Activated CD8-positive, alpha-beta T cell treated with anti-CD3 and anti-CD28 coated beads for 36 hours (primary cell): ENCODE measurements at regions of chr13 and their contacts with region 1.

Region 1: DNA sequence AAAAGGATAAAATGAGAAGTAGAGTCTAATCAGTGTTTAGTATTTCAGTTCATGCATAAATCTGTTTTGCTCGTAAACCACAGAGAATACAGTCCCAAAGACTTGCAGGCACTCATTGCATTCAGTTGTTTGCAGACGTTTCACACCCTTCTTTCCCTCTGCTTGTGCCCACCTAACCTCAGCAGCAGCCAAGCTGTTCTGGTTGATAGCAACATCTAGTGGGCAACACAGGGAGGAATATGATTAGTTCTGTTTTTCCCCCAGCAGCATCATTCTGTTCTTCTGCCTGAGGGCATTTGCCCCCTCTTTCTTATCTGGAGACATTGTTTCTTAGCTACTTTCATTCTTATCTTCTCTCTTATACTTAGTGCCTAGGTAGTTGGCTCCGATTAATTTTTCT is 135.6 kb downstream of the PAN3 start:
- DNase-seq: no peak
- ATAC-seq: peak; percentile 49
- H3K4me3 Mint-ChIP-seq: no peak overlapping the region
- H3K27ac Mint-ChIP-seq: no peak overlapping the region
- H3K4me1 Mint-ChIP-seq: peaks cover 7% of the 10 kb centered on the region
- H3K27me3 Mint-ChIP-seq: no peaks in the 10 kb centered on the region
- CTCF ChIP-seq: no peak

Region 2: GRCh38 chr13:28138012-28138755 is 135.7 kb before region 1 on chr13 and contains the start of gene PAN3:
- CTCF ChIA-PET with region 1: no interaction called
- POLR2A ChIA-PET with region 1: interaction called, 3 read pairs
- intact Hi-C with region 1: loop called (anchors 5 kb)
- DNase-seq: peak; percentile 91
- ATAC-seq: peak; percentile 53
- H3K4me3 Mint-ChIP-seq: peak within 1 kb of the TSS; percentile 91
- H3K27ac Mint-ChIP-seq: peak within 1 kb of the TSS; percentile 97
- H3K4me1 Mint-ChIP-seq: peaks cover 35% of the 10 kb centered on the region
- H3K27me3 Mint-ChIP-seq: no peaks in the 10 kb centered on the region
- CTCF ChIP-seq: no peak
- total RNA-seq, gene PAN3: 30.9 to 32.9 TPM

Region 3: DNA sequence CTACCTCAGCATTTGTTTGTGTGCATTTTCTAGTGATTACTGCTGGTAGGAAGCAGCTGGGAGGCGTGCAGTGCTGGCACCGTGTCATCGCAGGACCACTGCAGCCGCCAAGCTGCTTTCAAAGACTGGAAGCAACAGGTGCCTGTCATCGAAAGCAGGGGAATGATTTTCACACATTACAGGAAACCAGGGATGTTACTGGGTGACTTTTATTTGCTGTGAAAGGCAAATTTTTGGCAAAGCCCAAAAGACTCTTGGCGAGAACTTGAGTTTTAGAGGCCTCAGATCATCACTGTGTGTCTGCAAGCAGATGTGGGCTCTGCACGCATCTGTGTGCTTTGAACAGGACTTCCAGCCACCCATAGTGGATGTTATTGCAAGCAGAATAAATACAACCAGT is 44.6 kb after region 1 on chr13:
- CTCF ChIA-PET with region 1: no interaction called
- POLR2A ChIA-PET with region 1: no interaction called
- intact Hi-C with region 1: no loop called
- DNase-seq: no peak
- ATAC-seq: no peak
- H3K4me3 Mint-ChIP-seq: no peak overlapping the region
- H3K27ac Mint-ChIP-seq: no peak overlapping the region
- H3K4me1 Mint-ChIP-seq: no peaks in the 10 kb centered on the region
- H3K27me3 Mint-ChIP-seq: no peaks in the 10 kb centered on the region
- CTCF ChIP-seq: no peak